Activated CD4-positive, alpha-beta memory T cell treated with anti-CD3 and anti-CD28 coated beads, Interleukin-2, amount 10 ng/mL, durations not matched to agents 7 days and 5 days (primary cell): ENCODE measurements at regions of chrX and their contacts with region 1.

Region 1: GRCh38 chrX:65502618-65503017 is 32.0 kb downstream of the LAS1L start:
- DNase-seq: no peak
- H3K4me3 Mint-ChIP-seq: no peak overlapping the region
- H3K27ac Mint-ChIP-seq: no peak overlapping the region
- H3K4me1 Mint-ChIP-seq: no peaks in the 10 kb centered on the region
- H3K27me3 Mint-ChIP-seq: no peaks in the 10 kb centered on the region

Region 2: GRCh38 chrX:65528705-65529340 is 26.2 kb after region 1 on chrX:
- CTCF ChIA-PET with region 1: interaction called, 10 read pairs
- POLR2A ChIA-PET with region 1: no interaction called
- DNase-seq: peak; percentile 48
- H3K4me3 Mint-ChIP-seq: no peak overlapping the region
- H3K27ac Mint-ChIP-seq: no peak overlapping the region
- H3K4me1 Mint-ChIP-seq: peaks cover 13% of the 10 kb centered on the region
- H3K27me3 Mint-ChIP-seq: no peaks in the 10 kb centered on the region